Activated CD4-positive, alpha-beta T cell treated with anti-CD3 and anti-CD28 coated beads, Interleukin-2, amount 10 ng/mL, durations not matched to agents 7 days and 5 days (primary cell): ENCODE measurements at regions of chr16 and their contacts with region 1.

Region 1: DNA sequence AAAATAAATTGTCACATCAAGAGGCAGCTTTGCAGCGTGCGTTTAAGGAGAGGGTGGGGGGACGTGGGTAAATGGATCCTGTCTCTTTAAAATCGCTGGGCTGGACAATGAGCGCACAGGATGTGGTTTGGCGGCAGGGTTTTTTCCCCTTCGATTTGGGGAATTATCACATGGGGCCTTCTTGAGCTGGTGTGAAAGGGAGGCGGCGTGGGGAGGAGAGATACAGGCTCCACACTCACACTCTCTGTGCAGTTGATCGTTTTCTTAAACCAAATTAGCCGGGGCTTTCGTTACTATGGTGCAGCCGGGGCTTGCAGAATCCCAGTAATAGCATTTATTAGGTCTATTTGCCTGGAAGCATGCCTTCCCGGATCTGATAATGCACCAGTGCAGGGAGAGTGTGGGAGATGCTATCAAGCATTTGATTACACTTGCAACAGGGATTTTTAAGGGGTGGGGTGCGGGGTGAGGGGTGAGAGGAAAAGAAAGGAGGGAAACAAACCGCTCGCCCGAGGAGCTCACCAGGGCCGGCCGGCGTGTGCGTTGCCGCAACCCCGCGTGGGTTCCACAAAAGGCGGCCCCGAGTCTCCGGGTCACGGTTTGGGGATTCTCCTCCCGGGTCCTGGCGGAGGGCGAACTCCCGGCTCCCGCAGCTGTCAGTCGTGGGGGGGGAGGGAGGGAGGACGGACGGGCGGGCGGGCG is 58.9 kb upstream of the GSE1 start:
- DNase-seq: peak; percentile 84
- H3K4me3 Mint-ChIP-seq: peak overlapping the region; percentile 88
- H3K27ac Mint-ChIP-seq: peak overlapping the region; percentile 96
- H3K4me1 Mint-ChIP-seq: peaks cover 36% of the 10 kb centered on the region
- H3K27me3 Mint-ChIP-seq: peaks cover 3% of the 10 kb centered on the region

Region 2: GRCh38 chr16:85528528-85529387 is 25.5 kb before region 1 on chr16:
- CTCF ChIA-PET with region 1: interaction called, 10 read pairs
- POLR2A ChIA-PET with region 1: no interaction called
- DNase-seq: peak; percentile 15
- H3K4me3 Mint-ChIP-seq: no peak overlapping the region
- H3K27ac Mint-ChIP-seq: no peak overlapping the region
- H3K4me1 Mint-ChIP-seq: no peaks in the 10 kb centered on the region
- H3K27me3 Mint-ChIP-seq: no peaks in the 10 kb centered on the region

Region 3: GRCh38 chr16:85583491-85584181 is 29.4 kb after region 1 on chr16:
- CTCF ChIA-PET with region 1: no interaction called
- POLR2A ChIA-PET with region 1: no interaction called
- DNase-seq: no peak
- H3K4me3 Mint-ChIP-seq: no peak overlapping the region
- H3K27ac Mint-ChIP-seq: no peak overlapping the region
- H3K4me1 Mint-ChIP-seq: peaks cover 4% of the 10 kb centered on the region
- H3K27me3 Mint-ChIP-seq: no peaks in the 10 kb centered on the region